GM12878 (cell line): ENCODE measurements at regions of chr12 and their contacts with region 1.

Region 1: DNA sequence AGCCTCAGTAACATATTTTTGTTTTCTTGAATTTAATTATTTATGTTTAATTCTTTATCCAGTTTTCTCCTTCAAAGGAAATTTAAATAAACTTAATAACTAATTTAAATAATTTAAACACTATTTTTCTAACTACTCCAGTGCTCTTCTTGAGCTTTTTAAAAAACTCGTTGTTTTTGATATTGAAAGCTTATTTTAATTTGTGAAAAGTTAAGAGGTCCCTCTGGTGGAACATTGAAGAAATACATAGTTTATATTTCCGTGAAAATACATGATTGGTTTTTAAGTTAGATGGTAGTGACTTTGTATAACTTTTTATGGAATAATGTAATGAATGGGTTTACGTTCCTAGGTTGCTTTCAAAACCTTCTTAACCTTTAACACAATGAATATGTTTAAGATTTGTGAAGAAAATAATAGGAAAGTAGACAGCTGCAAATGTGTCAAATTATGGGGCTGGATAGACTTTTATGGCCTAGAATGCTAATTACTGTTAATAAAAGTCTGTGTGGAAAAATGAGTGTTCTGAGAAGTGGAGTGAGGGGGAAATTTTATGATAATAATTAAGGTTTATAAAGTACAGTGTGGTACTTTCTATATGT is 45.9 kb upstream of the MSRB3 start:
- DNase-seq: no peak
- ATAC-seq: peak; percentile 50; the same call in 1 of the 3 replicates
- H3K4me3 ChIP-seq: no peak overlapping the region
- H3K27ac ChIP-seq: no peak overlapping the region
- H3K4me1 ChIP-seq: no peaks in the 10 kb centered on the region
- H3K27me3 ChIP-seq: no peaks in the 10 kb centered on the region
- CTCF ChIP-seq: peak in 1 of 3 experiments; percentile 33; a peak in 3 of 6 replicates
- EP300 ChIP-seq: no peak
- POLR2A ChIP-seq: no peak
- RAD21 ChIP-seq: peak; percentile 57

Region 2: GRCh38 chr12:64796208-64796845 is 436.2 kb before region 1 on chr12:
- CTCF ChIA-PET with region 1: interaction called, 38 read pairs
- POLR2A ChIA-PET with region 1: no interaction called
- RAD21 ChIA-PET with region 1: interaction called, 39 read pairs
- SMC1A ChIA-PET with region 1: interaction called, 29 read pairs
- in situ Hi-C with region 1: loop called (anchors 10 kb)
- intact Hi-C with region 1: loop called (anchors 2 kb)
- DNase-seq: no peak
- ATAC-seq: peak; percentile 86
- H3K4me3 ChIP-seq: no peak overlapping the region
- H3K27ac ChIP-seq: no peak overlapping the region
- H3K4me1 ChIP-seq: peaks cover 12% of the 10 kb centered on the region
- H3K27me3 ChIP-seq: no peaks in the 10 kb centered on the region
- CTCF ChIP-seq: peak; percentile 64 to 77 (median 71)
- EP300 ChIP-seq: no peak
- POLR2A ChIP-seq: no peak
- RAD21 ChIP-seq: peak; percentile 87

Region 3: GRCh38 chr12:64890873-64891468 is 341.6 kb before region 1 on chr12:
- CTCF ChIA-PET with region 1: interaction called, 103 read pairs
- POLR2A ChIA-PET with region 1: interaction called, 3 read pairs
- RAD21 ChIA-PET with region 1: interaction called, 96 read pairs
- SMC1A ChIA-PET with region 1: interaction called, 53 read pairs
- in situ Hi-C with region 1: loop called (anchors 5 kb)
- intact Hi-C with region 1: loop called (anchors 1 kb)
- DNase-seq: no peak
- ATAC-seq: peak; percentile 60
- H3K4me3 ChIP-seq: no peak overlapping the region
- H3K27ac ChIP-seq: no peak overlapping the region
- H3K4me1 ChIP-seq: peaks cover 26% of the 10 kb centered on the region
- H3K27me3 ChIP-seq: no peaks in the 10 kb centered on the region
- CTCF ChIP-seq: peak; percentile 48 to 69 (median 59); a peak in 5 of 6 replicates
- EP300 ChIP-seq: no peak
- POLR2A ChIP-seq: no peak
- RAD21 ChIP-seq: peak; percentile 95

Region 4: GRCh38 chr12:65156366-65156841 is 76.2 kb before region 1 on chr12:
- CTCF ChIA-PET with region 1: interaction called, 26 read pairs
- POLR2A ChIA-PET with region 1: interaction called, 7 read pairs
- RAD21 ChIA-PET with region 1: interaction called, 24 read pairs
- SMC1A ChIA-PET with region 1: interaction called, 25 read pairs
- in situ Hi-C with region 1: no loop called
- intact Hi-C with region 1: no loop called
- DNase-seq: peak; percentile 77
- ATAC-seq: peak; percentile 90
- H3K4me3 ChIP-seq: peak overlapping the region; percentile 44
- H3K27ac ChIP-seq: peak overlapping the region; percentile 69
- H3K4me1 ChIP-seq: peaks cover 20% of the 10 kb centered on the region
- H3K27me3 ChIP-seq: no peaks in the 10 kb centered on the region
- CTCF ChIP-seq: no peak
- EP300 ChIP-seq: 0 out of 4 replicates have a peak, but pooled peaks of 1 of the 2 experiments have one; percentile 62
- POLR2A ChIP-seq: no peak
- RAD21 ChIP-seq: no peak

Region 5: DNA sequence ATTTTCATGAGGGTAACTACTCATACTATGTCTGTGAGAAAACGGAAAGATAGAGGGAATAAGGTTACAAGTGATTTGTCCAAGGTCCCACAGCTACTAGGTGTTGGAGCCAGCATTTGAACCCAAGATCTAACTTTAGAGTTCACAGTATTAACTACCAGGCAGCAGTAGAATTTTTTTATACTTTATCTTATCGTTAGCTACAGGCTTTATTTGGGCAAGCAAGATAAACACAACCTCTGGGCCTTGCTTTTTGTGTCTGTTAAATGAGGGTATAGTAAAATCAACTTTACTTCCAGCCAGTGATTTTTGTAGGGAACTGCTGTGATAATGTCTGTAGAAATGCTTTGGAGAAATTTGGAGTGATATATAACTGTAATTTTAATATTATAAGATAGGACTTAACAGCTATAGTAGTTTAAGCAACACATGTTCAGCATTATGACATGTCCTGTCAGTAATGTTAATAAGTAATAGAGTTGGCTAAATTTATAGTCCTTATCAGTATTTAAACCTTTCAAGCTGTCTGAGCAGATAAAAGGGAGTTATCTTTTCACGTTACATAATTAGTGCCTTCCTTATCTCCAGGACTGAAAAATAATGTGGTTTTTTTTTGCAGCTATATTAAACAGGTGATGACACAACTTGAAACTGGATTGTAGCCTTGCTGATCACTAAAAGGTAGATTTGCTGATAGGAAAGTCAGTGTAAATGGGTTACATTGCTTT is 50.4 kb before region 1 on chr12:
- CTCF ChIA-PET with region 1: interaction called, 18 read pairs
- POLR2A ChIA-PET with region 1: interaction called, 5 read pairs
- RAD21 ChIA-PET with region 1: interaction called, 12 read pairs
- SMC1A ChIA-PET with region 1: interaction called, 19 read pairs
- in situ Hi-C with region 1: no loop called
- intact Hi-C with region 1: no loop called
- DNase-seq: no peak
- ATAC-seq: peak; percentile 37
- H3K4me3 ChIP-seq: no peak overlapping the region
- H3K27ac ChIP-seq: no peak overlapping the region
- H3K4me1 ChIP-seq: peaks cover 17% of the 10 kb centered on the region
- H3K27me3 ChIP-seq: no peaks in the 10 kb centered on the region
- CTCF ChIP-seq: no peak
- EP300 ChIP-seq: no peak
- POLR2A ChIP-seq: no peak
- RAD21 ChIP-seq: no peak

Region 6: GRCh38 chr12:65217086-65217485 is 15.5 kb before region 1 on chr12:
- CTCF ChIA-PET with region 1: interaction called, 27 read pairs
- POLR2A ChIA-PET with region 1: no interaction called
- RAD21 ChIA-PET with region 1: interaction called, 6 read pairs
- SMC1A ChIA-PET with region 1: interaction called, 10 read pairs
- in situ Hi-C with region 1: no loop called
- intact Hi-C with region 1: no loop called
- DNase-seq: no peak
- ATAC-seq: no peak
- H3K4me3 ChIP-seq: no peak overlapping the region
- H3K27ac ChIP-seq: no peak overlapping the region
- H3K4me1 ChIP-seq: no peaks in the 10 kb centered on the region
- H3K27me3 ChIP-seq: no peaks in the 10 kb centered on the region
- CTCF ChIP-seq: no peak
- EP300 ChIP-seq: no peak
- POLR2A ChIP-seq: no peak
- RAD21 ChIP-seq: no peak

Region 7: DNA sequence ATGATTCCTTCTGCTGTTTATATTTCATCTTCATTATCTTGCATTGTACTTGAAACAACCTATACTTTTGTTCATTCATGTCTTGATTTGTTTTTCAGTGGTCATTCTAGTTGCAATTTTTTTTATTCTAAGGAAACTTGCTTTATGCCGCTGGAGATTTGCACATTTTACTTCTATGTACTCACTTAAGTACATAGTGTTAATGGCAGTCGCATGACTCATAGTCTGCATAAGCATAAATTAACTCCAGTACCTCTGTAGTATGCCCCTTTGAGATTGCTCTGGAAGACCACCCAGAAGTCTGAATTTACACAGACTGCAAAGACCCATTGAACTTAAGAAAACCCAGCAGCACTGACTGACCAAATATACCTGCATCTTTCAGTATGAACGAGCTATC is 122.9 kb after region 1 on chr12:
- CTCF ChIA-PET with region 1: no interaction called
- POLR2A ChIA-PET with region 1: no interaction called
- RAD21 ChIA-PET with region 1: no interaction called
- SMC1A ChIA-PET with region 1: no interaction called
- in situ Hi-C with region 1: no loop called
- intact Hi-C with region 1: no loop called
- DNase-seq: no peak
- ATAC-seq: no peak
- H3K4me3 ChIP-seq: no peak overlapping the region
- H3K27ac ChIP-seq: no peak overlapping the region
- H3K4me1 ChIP-seq: no peaks in the 10 kb centered on the region
- H3K27me3 ChIP-seq: no peaks in the 10 kb centered on the region
- CTCF ChIP-seq: no peak
- EP300 ChIP-seq: no peak
- POLR2A ChIP-seq: no peak
- RAD21 ChIP-seq: no peak